CD8-positive, alpha-beta T cell (primary cell): ENCODE measurements at regions of chr12 and their contacts with region 1.

Region 1: GRCh38 chr12:66409195-66409871 is 107.0 kb downstream of the HELB start:
- DNase-seq: peak in 7 of 9 experiments; percentile 11 to 70 (median 50)
- ATAC-seq: peak; percentile 73
- H3K4me3 ChIP-seq: no peak overlapping the region
- H3K4me3 Mint-ChIP-seq: no peak overlapping the region
- H3K27ac ChIP-seq: no peak overlapping the region
- H3K27ac Mint-ChIP-seq: no peak overlapping the region
- H3K4me1 ChIP-seq: no peaks in the 10 kb centered on the region
- H3K4me1 Mint-ChIP-seq: no peaks in the 10 kb centered on the region
- H3K27me3 ChIP-seq: no peaks in the 10 kb centered on the region
- H3K27me3 Mint-ChIP-seq: peaks cover 26% of the 10 kb centered on the region
- CTCF ChIP-seq: peak; percentile 72

Region 2: DNA sequence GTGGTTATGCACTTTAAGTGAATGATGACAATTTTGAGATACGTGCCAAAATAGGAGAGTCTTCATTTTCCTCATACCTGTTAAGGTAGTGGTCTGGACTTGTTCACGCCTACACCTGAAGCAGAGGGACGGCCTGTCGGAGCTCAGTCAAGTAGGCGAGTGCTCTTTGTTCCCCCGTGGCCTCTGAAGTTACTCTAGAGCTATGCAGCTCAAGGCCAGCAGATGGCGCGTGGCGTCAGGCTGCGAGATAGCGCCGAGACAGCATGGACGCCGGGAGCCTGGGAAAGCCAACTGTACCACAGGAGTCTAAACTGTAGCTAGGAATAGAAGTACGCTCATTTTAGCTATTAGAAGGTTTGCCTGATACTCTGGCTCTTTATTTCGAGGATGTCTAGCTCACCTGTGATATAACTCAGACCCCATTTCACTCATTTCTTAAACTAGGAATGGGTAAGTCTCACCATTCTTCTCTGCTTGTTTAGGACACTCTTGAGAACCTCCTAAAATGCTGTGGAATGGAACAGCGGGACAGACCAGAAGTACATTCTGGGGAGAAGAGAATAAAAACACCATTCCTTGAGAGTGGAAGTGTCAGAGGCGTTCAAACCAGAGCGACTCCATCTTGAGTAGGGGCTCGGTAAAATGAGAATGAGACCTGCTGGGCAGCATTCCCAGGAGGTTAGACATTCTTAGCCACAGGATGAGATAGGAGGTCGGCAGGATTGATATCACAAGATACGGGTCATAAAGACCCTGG is 852.5 kb before region 1 on chr12:
- CTCF ChIA-PET with region 1: no interaction called
- POLR2A ChIA-PET with region 1: no interaction called
- intact Hi-C with region 1: loop called in 1 of 2 experiments (anchors 2 kb)
- DNase-seq: peak; percentile 16 to 68 (median 53)
- ATAC-seq: peak; percentile 71
- H3K4me3 ChIP-seq: no peak overlapping the region
- H3K4me3 Mint-ChIP-seq: no peak overlapping the region
- H3K27ac ChIP-seq: no peak overlapping the region
- H3K27ac Mint-ChIP-seq: no peak overlapping the region
- H3K4me1 ChIP-seq: no peaks in the 10 kb centered on the region
- H3K4me1 Mint-ChIP-seq: peaks cover 7% of the 10 kb centered on the region
- H3K27me3 ChIP-seq: no peaks in the 10 kb centered on the region
- H3K27me3 Mint-ChIP-seq: peaks cover 14% of the 10 kb centered on the region
- CTCF ChIP-seq: peak; percentile 70

Region 3: DNA sequence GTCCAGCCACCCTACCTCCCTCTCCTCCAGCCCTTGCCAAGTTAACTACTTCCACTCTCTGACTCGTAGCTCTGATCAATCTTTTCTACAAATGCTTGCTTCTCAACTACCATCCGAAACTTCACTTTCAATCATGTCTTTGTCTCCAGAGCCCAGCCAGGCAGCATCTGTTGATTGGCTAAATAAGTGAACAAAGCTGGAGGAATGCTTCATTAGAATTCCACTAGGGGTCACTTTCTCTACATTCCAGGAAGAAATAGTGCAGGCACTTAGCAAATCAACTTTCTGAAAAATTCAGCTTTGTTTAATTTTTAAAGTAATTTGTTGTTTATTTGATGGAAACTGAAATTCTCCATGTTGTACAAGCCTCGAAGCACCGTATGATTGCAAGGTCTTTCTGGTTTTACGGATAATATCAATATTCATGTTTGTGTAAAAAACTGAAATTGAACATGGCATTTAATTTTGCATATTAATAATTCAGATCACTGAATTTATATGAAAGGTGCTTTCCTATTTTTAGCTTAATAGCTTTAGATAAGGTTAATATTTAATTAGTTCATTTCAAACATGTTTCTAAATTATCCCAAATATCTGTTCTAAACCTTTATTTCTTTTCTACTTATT is 139.5 kb before region 1 on chr12:
- CTCF ChIA-PET with region 1: interaction called, 136 read pairs
- POLR2A ChIA-PET with region 1: interaction called, 4 read pairs
- intact Hi-C with region 1: loop called (anchors 1 kb)
- DNase-seq: peak in 3 of 9 experiments; percentile 13 to 65 (median 56)
- ATAC-seq: peak; percentile 62
- H3K4me3 ChIP-seq: no peak overlapping the region
- H3K4me3 Mint-ChIP-seq: no peak overlapping the region
- H3K27ac ChIP-seq: no peak overlapping the region
- H3K27ac Mint-ChIP-seq: no peak overlapping the region
- H3K4me1 ChIP-seq: no peaks in the 10 kb centered on the region
- H3K4me1 Mint-ChIP-seq: peaks cover 7% of the 10 kb centered on the region
- H3K27me3 ChIP-seq: no peaks in the 10 kb centered on the region
- H3K27me3 Mint-ChIP-seq: peaks cover 2% of the 10 kb centered on the region
- CTCF ChIP-seq: peak; percentile 72

Region 4: GRCh38 chr12:66352197-66352596 is 57.1 kb before region 1 on chr12:
- CTCF ChIA-PET with region 1: interaction called, 10 read pairs
- POLR2A ChIA-PET with region 1: no interaction called
- intact Hi-C with region 1: no loop called
- DNase-seq: peak in 3 of 9 experiments; percentile 6 to 30 (median 14)
- ATAC-seq: no peak
- H3K4me3 ChIP-seq: no peak overlapping the region
- H3K4me3 Mint-ChIP-seq: no peak overlapping the region
- H3K27ac ChIP-seq: no peak overlapping the region
- H3K27ac Mint-ChIP-seq: no peak overlapping the region
- H3K4me1 ChIP-seq: no peaks in the 10 kb centered on the region
- H3K4me1 Mint-ChIP-seq: no peaks in the 10 kb centered on the region
- H3K27me3 ChIP-seq: no peaks in the 10 kb centered on the region
- H3K27me3 Mint-ChIP-seq: no peaks in the 10 kb centered on the region
- CTCF ChIP-seq: no peak

Region 5: DNA sequence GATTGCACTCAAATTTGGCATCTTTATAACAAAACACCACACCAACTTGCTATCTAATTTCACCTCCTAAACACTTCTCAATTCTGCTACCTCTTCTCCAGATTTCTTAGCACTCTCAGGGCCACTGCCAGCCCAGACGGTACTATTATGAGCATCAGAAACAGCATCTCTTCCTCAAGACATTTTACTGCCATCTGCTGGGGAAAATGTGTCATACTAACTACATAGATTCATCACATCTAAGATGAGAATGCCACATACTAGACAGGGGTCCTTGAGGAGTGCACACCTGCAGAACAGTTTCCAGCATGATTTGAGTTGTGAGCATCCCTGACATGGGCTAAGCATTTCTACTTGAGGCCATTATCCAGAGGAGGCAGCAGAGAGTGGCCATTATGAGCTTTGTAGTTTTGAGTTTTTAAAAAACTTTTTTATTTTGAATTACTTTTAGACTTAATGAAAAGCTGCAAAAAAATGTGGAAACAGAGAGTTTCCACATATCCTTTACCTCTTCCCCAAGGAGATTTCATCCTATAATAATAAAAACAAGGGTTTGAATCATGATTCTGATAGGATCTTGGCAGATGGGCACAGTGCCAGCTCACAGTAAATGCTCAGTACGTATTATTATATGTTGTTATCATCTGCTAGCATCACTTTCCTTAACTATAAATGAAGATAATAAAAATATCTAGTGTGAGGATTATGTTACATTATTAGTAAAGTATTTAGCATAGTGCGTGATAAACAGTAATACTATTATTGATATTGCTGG is 284.8 kb after region 1 on chr12:
- CTCF ChIA-PET with region 1: no interaction called
- POLR2A ChIA-PET with region 1: no interaction called
- intact Hi-C with region 1: loop called in 1 of 2 experiments (anchors 1 kb)
- DNase-seq: peak in 3 of 9 experiments; percentile 20 to 77 (median 64)
- ATAC-seq: peak; percentile 78
- H3K4me3 ChIP-seq: no peak overlapping the region
- H3K4me3 Mint-ChIP-seq: no peak overlapping the region
- H3K27ac ChIP-seq: no peak overlapping the region
- H3K27ac Mint-ChIP-seq: no peak overlapping the region
- H3K4me1 ChIP-seq: peaks cover 12% of the 10 kb centered on the region
- H3K4me1 Mint-ChIP-seq: peaks cover 23% of the 10 kb centered on the region
- H3K27me3 ChIP-seq: no peaks in the 10 kb centered on the region
- H3K27me3 Mint-ChIP-seq: no peaks in the 10 kb centered on the region
- CTCF ChIP-seq: peak; percentile 77